Naive thymus-derived CD8-positive, alpha-beta T cell (primary cell): ENCODE measurements at regions of chr2 and their contacts with region 1.

Region 1: GRCh38 chr2:70258532-70258874 is 566 bp downstream of the PCYOX1 start:
- DNase-seq: no peak
- ATAC-seq: no peak
- H3K4me3 Mint-ChIP-seq: peak overlapping the region; percentile 81 to 97 (median 90)
- H3K27ac Mint-ChIP-seq: peak overlapping the region; percentile 42 to 95 (median 84)
- H3K4me1 Mint-ChIP-seq: peaks cover 15 to 51% (median 38%) of the 10 kb centered on the region in 4 donors
- H3K27me3 Mint-ChIP-seq: no peaks in the 10 kb centered on the region

Region 2: DNA sequence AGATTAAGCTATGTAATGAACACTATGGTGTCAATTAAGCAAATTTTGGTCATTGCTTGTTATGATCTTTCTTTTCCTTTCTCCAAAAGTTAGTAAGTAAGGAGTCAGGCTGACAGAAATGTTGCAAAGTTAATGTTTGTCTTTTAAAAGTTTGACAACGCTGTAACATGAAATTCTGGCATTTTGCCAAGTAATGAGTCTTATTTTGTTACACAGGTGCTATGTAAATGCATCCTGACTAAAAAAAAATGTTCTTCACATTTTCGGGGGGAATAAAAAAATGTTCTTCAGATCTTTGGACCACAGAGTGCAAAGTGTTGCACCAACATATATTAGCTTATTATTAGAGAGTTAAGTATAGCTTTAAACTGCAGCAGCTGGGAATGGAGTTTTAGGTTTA is 1669.9 kb before region 1 on chr2:
- POLR2A ChIA-PET with region 1: no interaction called
- DNase-seq: no peak
- ATAC-seq: no peak
- H3K4me3 Mint-ChIP-seq: no peak overlapping the region
- H3K27ac Mint-ChIP-seq: no peak overlapping the region
- H3K4me1 Mint-ChIP-seq: no peaks in the 10 kb centered on the region
- H3K27me3 Mint-ChIP-seq: no peaks in the 10 kb centered on the region

Region 3: DNA sequence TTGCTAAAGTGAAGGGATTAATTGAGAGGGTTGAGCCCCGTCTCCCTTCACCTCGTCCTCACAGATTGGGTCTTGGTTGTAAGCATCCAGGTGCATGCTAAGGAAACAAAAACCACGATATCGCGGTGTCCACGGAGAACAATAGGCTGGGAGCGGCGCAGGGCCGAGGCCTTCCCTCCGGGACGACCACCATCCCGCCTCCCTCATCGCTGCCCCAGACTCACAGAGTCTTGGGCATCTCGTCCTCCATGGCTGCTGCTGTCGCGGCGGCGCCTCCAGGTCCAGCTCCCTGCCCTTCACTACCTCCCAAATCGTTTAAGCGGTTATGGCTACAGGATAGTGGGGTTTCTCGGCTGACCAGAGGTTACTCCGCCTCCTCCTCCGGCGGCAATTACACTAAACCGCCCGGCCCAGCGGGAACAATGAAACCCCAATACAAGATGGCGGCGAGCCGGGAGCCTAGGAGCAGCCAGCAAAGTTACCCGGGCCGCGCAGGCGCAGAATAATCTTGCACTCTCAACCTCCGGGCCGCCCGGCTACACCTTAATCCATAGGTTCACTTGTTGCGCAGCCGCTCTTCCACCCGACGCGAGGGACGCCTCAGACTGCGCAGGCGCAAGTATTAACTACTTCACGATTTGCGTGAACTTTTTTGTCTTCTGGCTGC is 10.2 kb before region 1 on chr2 and contains the start of gene TIA1:
- POLR2A ChIA-PET with region 1: interaction called, 21 read pairs
- DNase-seq: peak in 9 of 10 donors; percentile 97 to 100 (median 98)
- ATAC-seq: peak; percentile 96 to 97
- H3K4me3 Mint-ChIP-seq: peak within 1 kb of the TSS; percentile 91 to 99 (median 98)
- H3K27ac Mint-ChIP-seq: peak within 1 kb of the TSS; percentile 96 to 100 (median 99)
- H3K4me1 Mint-ChIP-seq: peaks cover 22 to 47% (median 36%) of the 10 kb centered on the region in 4 donors
- H3K27me3 Mint-ChIP-seq: peaks cover 0 to 4% (median 0%) of the 10 kb centered on the region in 5 donors
- polyA plus RNA-seq, gene TIA1: 37.0 to 62.6 (median 41.9) TPM

Region 4: GRCh38 chr2:70340921-70341765 is 82.6 kb after region 1 on chr2:
- POLR2A ChIA-PET with region 1: no interaction called
- DNase-seq: peak in 9 of 10 donors; percentile 10 to 65 (median 43)
- ATAC-seq: peak; percentile 50 to 53
- H3K4me3 Mint-ChIP-seq: no peak overlapping the region
- H3K27ac Mint-ChIP-seq: peak overlapping the region in 1 of 10 donors; percentile 26
- H3K4me1 Mint-ChIP-seq: peaks cover 0 to 7% (median 2%) of the 10 kb centered on the region in 4 donors
- H3K27me3 Mint-ChIP-seq: peaks cover 0 to 11% (median 5%) of the 10 kb centered on the region in 5 donors